Upper lobe of right lung (tissue), 1 donor: ENCODE measurements at regions of chr11 and their contacts with region 1.

Region 1: DNA sequence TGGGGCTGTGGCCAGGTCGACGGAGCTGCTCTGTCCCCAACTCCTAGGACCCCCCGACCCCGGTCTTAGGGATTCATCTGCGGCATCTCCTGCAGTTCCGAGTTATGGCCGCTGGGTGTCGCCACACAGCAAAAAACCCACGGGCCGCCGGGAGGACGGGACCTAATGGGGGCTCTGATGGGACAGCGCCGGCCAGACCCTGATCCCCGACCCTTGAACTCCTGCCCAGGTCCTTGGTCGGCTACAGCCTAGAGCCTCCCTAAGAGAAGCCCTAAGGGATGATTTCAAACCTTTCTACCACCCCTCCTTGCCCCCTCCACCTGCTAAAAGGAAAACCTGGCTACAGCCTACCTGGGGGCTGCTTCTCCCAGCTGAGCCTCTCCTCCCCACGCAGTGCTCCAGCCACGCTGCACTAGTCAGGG is 30.8 kb upstream of the LRRC10B start:
- DNase-seq: peak; percentile 73
- ATAC-seq: peak; percentile 62
- H3K4me3 ChIP-seq: no peak overlapping the region
- H3K27ac ChIP-seq: no peak overlapping the region
- H3K4me1 ChIP-seq: no peaks in the 10 kb centered on the region
- H3K27me3 ChIP-seq: peaks cover 6% of the 10 kb centered on the region
- CTCF ChIP-seq: peak; percentile 95

Region 2: DNA sequence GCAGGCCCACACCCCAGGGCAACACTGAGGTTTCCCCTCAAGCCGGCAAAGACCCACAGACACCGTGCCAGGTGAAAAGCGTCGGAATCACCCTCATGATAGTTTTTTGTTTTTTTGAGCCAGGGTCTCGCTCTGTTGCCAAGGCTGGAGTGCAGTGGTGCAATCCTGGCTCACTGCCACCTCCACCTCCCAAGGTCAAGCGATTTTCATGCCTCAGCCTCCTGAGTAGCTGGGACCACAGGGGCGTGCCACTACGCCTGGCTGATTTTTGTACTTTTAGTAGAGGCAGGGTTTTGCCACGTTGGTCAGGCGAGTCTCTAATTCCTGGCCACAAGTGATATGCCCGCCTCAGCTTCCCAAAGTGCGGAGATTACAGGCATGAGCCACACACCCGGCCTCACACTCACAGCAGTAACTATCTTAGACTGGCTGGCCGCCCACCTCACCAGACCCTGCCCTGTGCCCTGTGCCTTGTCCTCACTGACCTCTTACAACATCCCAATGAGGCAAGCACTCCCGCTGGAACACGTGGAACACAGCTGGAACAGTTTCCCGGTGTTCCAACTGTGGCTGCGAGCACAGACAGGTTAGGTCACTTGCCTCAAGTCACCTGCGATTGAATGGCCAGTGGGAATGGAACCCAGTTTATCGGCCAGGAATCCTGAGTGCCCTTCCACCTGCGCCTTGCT is 51.9 kb after region 1 on chr11:
- intact Hi-C with region 1: loop called (anchors 10 kb)
- DNase-seq: peak; percentile 75
- ATAC-seq: peak; percentile 51
- H3K4me3 ChIP-seq: no peak overlapping the region
- H3K27ac ChIP-seq: no peak overlapping the region
- H3K4me1 ChIP-seq: peaks cover 7% of the 10 kb centered on the region
- H3K27me3 ChIP-seq: no peaks in the 10 kb centered on the region
- CTCF ChIP-seq: no peak

Region 3: DNA sequence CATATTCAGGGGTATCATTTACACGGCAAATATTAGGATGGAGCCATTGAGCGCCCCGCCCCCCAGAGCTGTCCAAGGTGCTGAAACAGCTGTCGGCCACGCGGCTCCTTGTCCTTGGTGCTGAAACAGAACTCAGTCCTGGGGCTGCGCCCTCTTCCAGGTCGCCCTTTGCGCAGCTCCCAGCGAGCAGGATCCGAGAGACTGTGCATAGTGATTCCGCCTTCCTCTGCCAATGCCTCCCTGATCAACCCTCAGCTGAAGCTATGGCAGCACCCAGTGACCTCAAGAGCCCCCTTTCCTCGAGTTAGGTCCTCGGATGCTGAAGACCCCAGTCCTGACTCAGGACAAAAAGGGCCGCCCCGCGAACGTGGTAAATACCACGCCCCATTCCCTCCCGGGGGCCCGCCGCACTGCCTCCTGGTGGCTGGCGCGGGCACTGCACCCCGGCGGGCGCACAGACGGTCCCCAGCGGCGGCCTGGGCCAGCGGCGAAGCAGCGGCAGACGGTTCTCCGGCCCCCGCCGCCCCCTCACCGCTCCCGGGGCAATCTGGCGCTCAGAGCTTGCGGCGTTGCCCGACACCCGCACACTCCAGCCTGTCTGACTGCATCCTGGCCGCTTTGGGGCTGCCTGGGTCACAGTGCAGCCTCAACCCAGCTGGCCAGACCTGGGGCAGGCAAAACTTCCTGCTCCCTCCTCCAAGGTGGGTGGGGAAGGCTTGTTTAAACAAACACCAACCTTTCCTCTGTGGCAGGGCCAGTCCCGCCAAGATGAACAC is 89.7 kb after region 1 on chr11:
- intact Hi-C with region 1: no loop called
- DNase-seq: peak; percentile 86
- ATAC-seq: peak; percentile 88
- H3K4me3 ChIP-seq: no peak overlapping the region
- H3K27ac ChIP-seq: no peak overlapping the region
- H3K4me1 ChIP-seq: no peaks in the 10 kb centered on the region
- H3K27me3 ChIP-seq: peaks cover 24% of the 10 kb centered on the region
- CTCF ChIP-seq: peak; percentile 35

Region 4: DNA sequence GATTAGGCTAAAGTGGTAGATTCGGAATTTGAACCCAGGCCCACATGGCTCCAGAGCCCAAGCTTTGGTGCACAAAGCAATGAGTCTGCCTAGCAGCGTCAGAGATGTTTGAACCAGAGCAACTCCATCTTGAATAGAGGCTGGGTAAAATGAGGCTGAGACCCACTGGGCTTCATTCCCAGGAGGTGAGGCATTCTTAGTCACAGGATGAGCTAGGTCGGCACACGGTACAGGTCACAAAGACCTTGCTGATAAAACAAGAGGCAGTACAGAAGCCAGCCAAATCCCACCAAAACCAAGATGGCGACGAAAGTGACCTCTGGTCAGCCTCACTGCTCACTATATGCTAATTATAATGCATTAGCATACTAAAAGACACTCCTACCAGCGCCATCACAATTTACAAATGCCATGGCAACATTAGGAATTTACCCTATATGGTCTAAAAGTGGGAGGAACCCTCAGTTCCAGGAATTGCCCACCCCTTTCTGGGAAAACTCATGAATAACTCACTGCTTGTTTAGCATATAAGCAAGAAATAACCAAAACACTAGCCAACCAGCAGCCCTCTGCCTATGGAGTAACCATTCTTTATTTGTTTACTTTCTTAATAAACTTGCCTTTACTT is 162.2 kb after region 1 on chr11:
- intact Hi-C with region 1: loop called (anchors 10 kb)
- DNase-seq: no peak
- ATAC-seq: no peak
- H3K4me3 ChIP-seq: no peak overlapping the region
- H3K27ac ChIP-seq: no peak overlapping the region
- H3K4me1 ChIP-seq: peaks cover 10% of the 10 kb centered on the region
- H3K27me3 ChIP-seq: peaks cover 6% of the 10 kb centered on the region
- CTCF ChIP-seq: no peak

Region 5: GRCh38 chr11:62048065-62048464 is 570.3 kb after region 1 on chr11:
- intact Hi-C with region 1: no loop called
- DNase-seq: no peak
- ATAC-seq: no peak
- H3K4me3 ChIP-seq: no peak overlapping the region
- H3K27ac ChIP-seq: no peak overlapping the region
- H3K4me1 ChIP-seq: no peaks in the 10 kb centered on the region
- H3K27me3 ChIP-seq: no peaks in the 10 kb centered on the region
- CTCF ChIP-seq: no peak